GM12878 (cell line): ENCODE measurements at regions of chr20 and their contacts with region 1.

Region 1: DNA sequence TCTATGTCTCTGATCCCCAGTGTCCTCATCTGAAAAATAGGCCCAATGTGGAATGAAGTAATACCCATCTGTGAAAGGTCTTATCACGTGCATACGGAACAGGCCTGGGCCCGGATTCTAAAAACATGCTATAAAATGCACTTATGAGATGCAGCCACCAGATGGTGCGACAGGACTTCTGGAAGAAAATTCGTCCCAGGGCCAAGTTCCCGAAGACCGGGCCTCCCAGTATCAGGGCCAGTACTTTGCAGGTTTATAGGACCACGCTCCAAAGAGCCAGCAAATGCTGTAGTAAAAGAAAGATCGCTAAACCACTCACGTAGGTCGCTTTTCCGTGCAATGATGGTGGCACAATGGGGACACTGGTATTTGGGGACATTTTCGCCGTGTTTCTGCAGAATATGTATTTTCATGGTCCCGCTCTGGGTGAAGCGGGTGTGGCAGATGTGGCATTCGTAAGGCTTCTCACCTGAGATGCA is 10.6 kb downstream of the CTCFL start:
- DNase-seq: no peak
- ATAC-seq: peak; percentile 73
- H3K4me3 ChIP-seq: no peak overlapping the region
- H3K27ac ChIP-seq: no peak overlapping the region
- H3K4me1 ChIP-seq: no peaks in the 10 kb centered on the region
- H3K27me3 ChIP-seq: no peaks in the 10 kb centered on the region
- CTCF ChIP-seq: peak; percentile 58 to 78 (median 63)
- EP300 ChIP-seq: no peak
- POLR2A ChIP-seq: no peak
- RAD21 ChIP-seq: peak; percentile 83

Region 2: GRCh38 chr20:57089691-57090150 is 424.6 kb before region 1 on chr20:
- CTCF ChIA-PET with region 1: no interaction called
- POLR2A ChIA-PET with region 1: no interaction called
- RAD21 ChIA-PET with region 1: no interaction called
- SMC1A ChIA-PET with region 1: no interaction called
- in situ Hi-C with region 1: loop called (anchors 10 kb)
- intact Hi-C with region 1: no loop called
- DNase-seq: no peak
- ATAC-seq: peak; percentile 97
- H3K4me3 ChIP-seq: no peak overlapping the region
- H3K27ac ChIP-seq: no peak overlapping the region
- H3K4me1 ChIP-seq: no peaks in the 10 kb centered on the region
- H3K27me3 ChIP-seq: no peaks in the 10 kb centered on the region
- CTCF ChIP-seq: peak; percentile 77 to 95 (median 82)
- EP300 ChIP-seq: no peak
- POLR2A ChIP-seq: no peak
- RAD21 ChIP-seq: peak; percentile 78

Region 3: GRCh38 chr20:57101577-57102559 is 412.4 kb before region 1 on chr20:
- CTCF ChIA-PET with region 1: no interaction called
- POLR2A ChIA-PET with region 1: no interaction called
- RAD21 ChIA-PET with region 1: no interaction called
- SMC1A ChIA-PET with region 1: no interaction called
- in situ Hi-C with region 1: no loop called
- intact Hi-C with region 1: no loop called
- DNase-seq: no peak
- ATAC-seq: no peak
- H3K4me3 ChIP-seq: no peak overlapping the region
- H3K27ac ChIP-seq: no peak overlapping the region
- H3K4me1 ChIP-seq: no peaks in the 10 kb centered on the region
- H3K27me3 ChIP-seq: no peaks in the 10 kb centered on the region; a peak in 1 of 4 replicates
- CTCF ChIP-seq: no peak
- EP300 ChIP-seq: no peak
- POLR2A ChIP-seq: no peak
- RAD21 ChIP-seq: no peak

Region 4: DNA sequence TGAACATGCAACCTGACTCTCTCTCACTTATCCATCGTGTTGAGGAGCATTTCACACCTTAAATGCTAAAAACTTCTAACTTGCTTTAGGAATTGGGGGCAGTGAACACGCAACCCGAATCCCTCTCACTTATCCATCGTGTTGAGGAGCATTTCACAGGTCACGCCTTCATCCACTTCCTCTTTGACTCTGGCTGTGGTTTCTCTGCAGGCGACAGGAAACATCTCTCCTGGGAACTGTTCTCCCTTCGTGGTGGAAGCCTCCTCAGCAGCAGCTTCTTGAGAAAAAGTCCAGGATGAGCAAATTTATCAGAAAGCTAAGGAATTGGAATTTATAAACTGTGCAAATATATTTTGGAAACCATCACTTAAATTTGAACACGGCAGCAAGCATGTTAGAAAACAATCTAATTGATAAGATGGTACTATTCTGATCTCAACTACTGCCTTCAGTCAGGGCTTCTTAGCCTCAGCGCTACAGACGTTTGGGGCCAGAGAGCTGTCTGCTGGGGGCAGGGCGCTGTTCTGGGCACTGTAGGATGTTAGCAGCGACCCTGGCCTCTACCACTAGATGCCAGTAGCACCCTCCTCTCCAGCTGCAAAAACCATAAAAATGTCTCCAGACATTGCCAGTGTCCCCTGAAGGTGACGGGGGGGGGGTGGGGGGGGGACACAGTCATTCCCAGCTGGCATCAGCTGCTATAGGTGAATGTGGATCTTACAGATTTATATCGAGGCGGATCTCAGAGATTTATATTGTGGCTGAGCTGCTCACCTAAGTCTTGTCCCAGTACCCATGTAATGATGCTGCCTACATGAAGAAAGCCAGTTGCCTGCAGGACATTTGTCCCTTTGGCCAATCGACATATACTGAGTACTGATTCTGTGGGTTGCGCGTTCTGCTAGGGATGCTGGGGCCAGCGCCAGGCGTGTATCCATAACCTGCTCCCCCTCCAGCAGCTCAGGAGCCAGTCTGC is 15.6 kb before region 1 on chr20:
- CTCF ChIA-PET with region 1: interaction called, 17 read pairs
- POLR2A ChIA-PET with region 1: no interaction called
- RAD21 ChIA-PET with region 1: interaction called, 3 read pairs
- SMC1A ChIA-PET with region 1: interaction called, 5 read pairs
- in situ Hi-C with region 1: no loop called
- intact Hi-C with region 1: no loop called
- DNase-seq: no peak
- ATAC-seq: peak; percentile 93
- H3K4me3 ChIP-seq: no peak overlapping the region
- H3K27ac ChIP-seq: no peak overlapping the region
- H3K4me1 ChIP-seq: peaks cover 21% of the 10 kb centered on the region
- H3K27me3 ChIP-seq: peaks cover 0 to 2% of the 10 kb centered on the region in 2 experiments; a peak in 1 of 4 replicates
- CTCF ChIP-seq: peak; percentile 54 to 74 (median 70)
- EP300 ChIP-seq: no peak
- POLR2A ChIP-seq: no peak
- RAD21 ChIP-seq: peak; percentile 60

Region 5: GRCh38 chr20:57529820-57530219 is 15.5 kb after region 1 on chr20:
- CTCF ChIA-PET with region 1: no interaction called
- POLR2A ChIA-PET with region 1: no interaction called
- RAD21 ChIA-PET with region 1: no interaction called
- SMC1A ChIA-PET with region 1: no interaction called
- in situ Hi-C with region 1: no loop called
- intact Hi-C with region 1: no loop called
- DNase-seq: no peak
- ATAC-seq: no peak
- H3K4me3 ChIP-seq: no peak overlapping the region
- H3K27ac ChIP-seq: no peak overlapping the region
- H3K4me1 ChIP-seq: no peaks in the 10 kb centered on the region
- H3K27me3 ChIP-seq: no peaks in the 10 kb centered on the region
- CTCF ChIP-seq: no peak
- EP300 ChIP-seq: no peak
- POLR2A ChIP-seq: no peak
- RAD21 ChIP-seq: no peak

Region 6: GRCh38 chr20:57611586-57612311 is 97.4 kb after region 1 on chr20:
- CTCF ChIA-PET with region 1: no interaction called
- POLR2A ChIA-PET with region 1: no interaction called
- RAD21 ChIA-PET with region 1: no interaction called
- SMC1A ChIA-PET with region 1: no interaction called
- in situ Hi-C with region 1: no loop called
- intact Hi-C with region 1: no loop called
- DNase-seq: no peak
- ATAC-seq: no peak
- H3K4me3 ChIP-seq: no peak overlapping the region
- H3K27ac ChIP-seq: no peak overlapping the region
- H3K4me1 ChIP-seq: no peaks in the 10 kb centered on the region
- H3K27me3 ChIP-seq: peaks cover 0 to 2% of the 10 kb centered on the region in 2 experiments; a peak in 1 of 4 replicates
- CTCF ChIP-seq: no peak
- EP300 ChIP-seq: no peak
- POLR2A ChIP-seq: no peak
- RAD21 ChIP-seq: no peak

Region 7: GRCh38 chr20:58179432-58180099 is 665.3 kb after region 1 on chr20:
- CTCF ChIA-PET with region 1: no interaction called
- POLR2A ChIA-PET with region 1: no interaction called
- RAD21 ChIA-PET with region 1: interaction called, 3 read pairs
- SMC1A ChIA-PET with region 1: no interaction called
- in situ Hi-C with region 1: loop called (anchors 10 kb)
- intact Hi-C with region 1: no loop called
- DNase-seq: no peak
- ATAC-seq: peak; percentile 98
- H3K4me3 ChIP-seq: no peak overlapping the region
- H3K27ac ChIP-seq: no peak overlapping the region
- H3K4me1 ChIP-seq: no peaks in the 10 kb centered on the region
- H3K27me3 ChIP-seq: peaks cover 0 to 1% of the 10 kb centered on the region in 2 experiments
- CTCF ChIP-seq: peak; percentile 90 to 92 (median 90); a peak in 5 of 6 replicates
- EP300 ChIP-seq: no peak
- POLR2A ChIP-seq: no peak
- RAD21 ChIP-seq: peak; percentile 79

Region 8: GRCh38 chr20:58209652-58210397 is 695.5 kb after region 1 on chr20:
- CTCF ChIA-PET with region 1: interaction called, 7 read pairs
- POLR2A ChIA-PET with region 1: no interaction called
- RAD21 ChIA-PET with region 1: no interaction called
- SMC1A ChIA-PET with region 1: interaction called, 3 read pairs
- in situ Hi-C with region 1: loop called (anchors 5 kb)
- intact Hi-C with region 1: loop called (anchors 5 kb)
- DNase-seq: peak; percentile 17
- ATAC-seq: peak; percentile 98
- H3K4me3 ChIP-seq: no peak overlapping the region
- H3K27ac ChIP-seq: no peak overlapping the region
- H3K4me1 ChIP-seq: no peaks in the 10 kb centered on the region
- H3K27me3 ChIP-seq: no peaks in the 10 kb centered on the region; a peak in 3 of 4 replicates
- CTCF ChIP-seq: peak; percentile 100; a peak in 5 of 6 replicates
- EP300 ChIP-seq: no peak
- POLR2A ChIP-seq: no peak
- RAD21 ChIP-seq: peak; percentile 89